Activated CD4-positive, alpha-beta T cell treated with anti-CD3 and anti-CD28 coated beads for 36 hours (primary cell): ENCODE measurements at regions of chr5 and their contacts with region 1.

Region 1: GRCh38 chr5:140401362-140402257 is at the start of gene ANKHD1:
- DNase-seq: peak; percentile 98
- ATAC-seq: peak; percentile 83
- H3K4me3 Mint-ChIP-seq: no peak within 1 kb of the TSS
- H3K27ac Mint-ChIP-seq: peak within 1 kb of the TSS; percentile 87
- H3K4me1 Mint-ChIP-seq: peaks cover 24% of the 10 kb centered on the region
- H3K27me3 Mint-ChIP-seq: no peaks in the 10 kb centered on the region
- total RNA-seq, gene ANKHD1: 77.1 to 93.5 TPM

Region 2: GRCh38 chr5:140107312-140108083 is 294.1 kb before region 1 on chr5:
- CTCF ChIA-PET with region 1: no interaction called
- POLR2A ChIA-PET with region 1: no interaction called
- intact Hi-C with region 1: loop called in 1 of 2 experiments (anchors 1 kb)
- DNase-seq: peak; percentile 96
- ATAC-seq: peak; percentile 90
- H3K4me3 Mint-ChIP-seq: peak overlapping the region; percentile 99
- H3K27ac Mint-ChIP-seq: peak overlapping the region; percentile 95
- H3K4me1 Mint-ChIP-seq: peaks cover 43% of the 10 kb centered on the region
- H3K27me3 Mint-ChIP-seq: peaks cover 3% of the 10 kb centered on the region

Region 3: DNA sequence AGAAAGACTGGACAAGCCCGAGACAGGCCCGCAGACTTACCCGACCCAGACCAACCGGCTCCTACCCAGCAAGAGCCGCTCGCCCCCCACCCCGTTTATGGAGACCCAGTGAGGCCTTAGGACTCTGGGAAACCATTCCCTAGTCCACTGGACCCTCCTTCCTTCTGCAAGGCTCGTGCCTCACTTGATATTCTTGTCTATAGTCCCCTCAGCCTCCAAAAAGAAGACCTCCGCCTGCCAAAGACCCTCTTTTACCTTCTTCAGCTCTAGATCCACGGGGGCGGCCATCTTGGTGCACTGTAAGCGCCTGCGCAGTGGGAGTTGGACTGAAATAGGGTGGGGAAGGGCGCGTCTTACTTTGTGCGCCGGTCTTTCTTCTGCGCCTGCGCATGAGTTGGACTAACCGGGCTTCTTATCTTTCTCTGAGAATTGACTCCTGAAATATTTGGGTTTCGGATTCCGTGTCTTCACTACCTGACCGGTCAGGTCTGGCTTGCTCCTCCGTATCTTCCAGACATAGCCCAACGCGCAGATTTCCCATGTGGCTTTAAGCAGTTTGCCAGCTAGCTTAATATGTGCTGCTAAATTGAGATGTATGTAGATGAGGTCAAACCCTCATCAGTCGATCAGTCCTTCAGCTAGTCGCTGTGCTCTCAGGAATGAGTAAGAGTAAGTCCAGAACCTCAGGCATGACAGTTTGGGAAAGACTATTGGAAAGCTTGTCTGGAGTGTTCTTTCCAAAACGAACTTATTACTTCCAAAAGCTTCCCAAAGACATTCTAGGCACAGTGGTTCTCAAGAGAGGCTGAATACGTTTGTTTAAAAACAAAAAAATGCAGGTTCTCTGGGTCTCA is 98.6 kb before region 1 on chr5 and contains the start of gene PFDN1:
- CTCF ChIA-PET with region 1: no interaction called
- POLR2A ChIA-PET with region 1: no interaction called
- intact Hi-C with region 1: loop called in 1 of 2 experiments (anchors 1 kb)
- DNase-seq: peak; percentile 96
- ATAC-seq: peak; percentile 99
- H3K4me3 Mint-ChIP-seq: peak within 1 kb of the TSS; percentile 91
- H3K27ac Mint-ChIP-seq: peak within 1 kb of the TSS; percentile 91
- H3K4me1 Mint-ChIP-seq: peaks cover 29% of the 10 kb centered on the region
- H3K27me3 Mint-ChIP-seq: peaks cover 4% of the 10 kb centered on the region
- total RNA-seq, gene PFDN1: 52.6 to 63.2 TPM

Region 4: GRCh38 chr5:140322751-140323731 is 78.6 kb before region 1 on chr5:
- CTCF ChIA-PET with region 1: no interaction called
- POLR2A ChIA-PET with region 1: no interaction called
- intact Hi-C with region 1: no loop called
- DNase-seq: no peak
- ATAC-seq: no peak
- H3K4me3 Mint-ChIP-seq: no peak overlapping the region
- H3K27ac Mint-ChIP-seq: no peak overlapping the region
- H3K4me1 Mint-ChIP-seq: peaks cover 5% of the 10 kb centered on the region
- H3K27me3 Mint-ChIP-seq: no peaks in the 10 kb centered on the region

Region 5: DNA sequence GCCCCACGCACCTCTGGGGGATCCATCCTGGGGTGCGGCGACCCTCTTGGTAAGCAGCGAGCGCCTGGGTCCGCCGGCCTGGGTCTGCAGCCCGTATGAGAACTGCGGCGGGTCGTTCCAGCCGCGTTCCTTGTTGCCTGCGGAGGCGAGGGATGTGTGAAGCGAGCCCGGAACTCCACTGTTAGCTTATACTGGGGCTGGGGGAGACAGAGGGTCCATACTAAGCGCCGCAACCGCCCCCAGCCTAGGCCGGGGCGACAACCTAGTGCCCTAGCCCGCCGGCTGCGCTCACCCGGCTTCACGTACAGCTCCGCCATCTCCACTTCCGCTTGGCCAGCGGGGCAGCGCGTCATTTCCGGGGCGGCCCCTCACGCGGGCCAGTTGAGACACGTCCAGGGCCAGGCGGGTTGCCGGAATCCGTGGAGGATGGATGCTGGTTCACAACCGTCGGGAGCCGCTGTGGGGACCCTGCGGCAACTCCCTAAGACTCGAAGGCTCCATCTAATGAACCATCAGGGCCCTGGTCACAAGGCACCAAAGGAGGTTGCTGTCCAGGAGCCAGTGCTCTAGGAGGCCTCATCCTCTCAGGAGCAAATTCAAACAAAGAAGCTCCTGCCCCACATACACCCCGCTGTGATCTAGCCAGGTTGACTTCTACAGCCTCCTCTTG is 155.7 kb after region 1 on chr5 and contains the start of gene SRA1:
- CTCF ChIA-PET with region 1: no interaction called
- POLR2A ChIA-PET with region 1: interaction called, 3 read pairs
- intact Hi-C with region 1: loop called in 1 of 2 experiments (anchors 1 kb)
- DNase-seq: peak; percentile 92
- ATAC-seq: peak; percentile 83
- H3K4me3 Mint-ChIP-seq: peak within 1 kb of the TSS; percentile 89
- H3K27ac Mint-ChIP-seq: peak within 1 kb of the TSS; percentile 93
- H3K4me1 Mint-ChIP-seq: peaks cover 45% of the 10 kb centered on the region
- H3K27me3 Mint-ChIP-seq: no peaks in the 10 kb centered on the region
- total RNA-seq, gene SRA1: 33.2 to 47.3 TPM

Region 6: DNA sequence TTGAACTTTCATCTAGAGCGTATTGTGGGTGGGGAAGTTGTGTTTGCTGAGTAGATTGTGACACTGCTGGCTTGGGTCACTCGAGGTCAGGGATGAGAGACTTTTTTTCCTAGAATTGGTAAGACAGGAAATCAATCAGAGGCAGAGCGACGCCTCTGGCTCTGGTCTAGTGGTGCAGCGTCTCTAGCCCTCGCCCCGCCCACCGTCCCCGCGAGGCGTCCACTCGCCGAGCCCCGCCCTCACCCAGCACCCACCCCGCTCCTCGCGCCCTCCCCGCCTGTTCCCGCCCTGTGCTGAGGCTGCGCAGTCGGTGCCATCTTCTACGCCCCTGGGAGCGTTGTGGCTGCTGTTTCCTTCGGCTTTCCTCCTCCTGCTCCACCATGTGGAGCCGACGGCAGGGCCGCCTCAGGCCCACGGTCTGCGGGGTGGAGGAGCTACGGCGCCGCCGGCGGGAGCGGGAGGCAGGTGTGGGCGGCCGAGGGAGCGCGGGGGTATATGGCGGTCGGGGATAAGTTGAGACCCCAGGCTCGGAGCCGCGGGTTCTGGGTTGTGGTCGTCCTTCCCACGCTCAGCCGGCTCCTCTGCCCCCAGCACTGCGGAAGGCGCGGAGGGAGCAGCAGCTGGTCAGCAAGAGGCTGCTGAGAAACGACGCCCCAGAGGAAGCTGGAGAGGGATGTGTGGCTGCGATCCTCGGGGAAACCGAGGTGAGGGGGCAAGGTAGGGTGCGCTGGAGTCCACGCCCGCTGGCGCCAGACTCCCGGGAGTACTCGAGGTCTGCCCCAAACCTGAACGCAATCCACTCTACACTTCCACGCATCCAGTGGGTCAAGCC is 237.8 kb after region 1 on chr5 and contains the start of gene TMCO6:
- CTCF ChIA-PET with region 1: no interaction called
- POLR2A ChIA-PET with region 1: interaction called, 3 read pairs
- intact Hi-C with region 1: loop called (anchors 1 kb)
- DNase-seq: peak; percentile 99
- ATAC-seq: peak; percentile 94
- H3K4me3 Mint-ChIP-seq: peak within 1 kb of the TSS; percentile 93
- H3K27ac Mint-ChIP-seq: peak within 1 kb of the TSS; percentile 95
- H3K4me1 Mint-ChIP-seq: peaks cover 39% of the 10 kb centered on the region
- H3K27me3 Mint-ChIP-seq: no peaks in the 10 kb centered on the region
- total RNA-seq, gene TMCO6: 36.5 to 36.6 TPM

Region 7: GRCh38 chr5:140690941-140691924 is 289.6 kb after region 1 on chr5 and contains the starts of genes HARS1 and HARS2:
- CTCF ChIA-PET with region 1: no interaction called
- POLR2A ChIA-PET with region 1: interaction called, 3 read pairs
- intact Hi-C with region 1: loop called (anchors 1 kb)
- DNase-seq: peak; percentile 91
- ATAC-seq: peak; percentile 95
- H3K4me3 Mint-ChIP-seq: peak within 1 kb of the TSS; percentile 97
- H3K27ac Mint-ChIP-seq: peak within 1 kb of the TSS; percentile 98
- H3K4me1 Mint-ChIP-seq: peaks cover 41% of the 10 kb centered on the region
- H3K27me3 Mint-ChIP-seq: no peaks in the 10 kb centered on the region
- total RNA-seq, gene HARS1: 83.3 to 91.0 TPM
- total RNA-seq, gene HARS2: 20.9 to 28.1 TPM

Region 8: DNA sequence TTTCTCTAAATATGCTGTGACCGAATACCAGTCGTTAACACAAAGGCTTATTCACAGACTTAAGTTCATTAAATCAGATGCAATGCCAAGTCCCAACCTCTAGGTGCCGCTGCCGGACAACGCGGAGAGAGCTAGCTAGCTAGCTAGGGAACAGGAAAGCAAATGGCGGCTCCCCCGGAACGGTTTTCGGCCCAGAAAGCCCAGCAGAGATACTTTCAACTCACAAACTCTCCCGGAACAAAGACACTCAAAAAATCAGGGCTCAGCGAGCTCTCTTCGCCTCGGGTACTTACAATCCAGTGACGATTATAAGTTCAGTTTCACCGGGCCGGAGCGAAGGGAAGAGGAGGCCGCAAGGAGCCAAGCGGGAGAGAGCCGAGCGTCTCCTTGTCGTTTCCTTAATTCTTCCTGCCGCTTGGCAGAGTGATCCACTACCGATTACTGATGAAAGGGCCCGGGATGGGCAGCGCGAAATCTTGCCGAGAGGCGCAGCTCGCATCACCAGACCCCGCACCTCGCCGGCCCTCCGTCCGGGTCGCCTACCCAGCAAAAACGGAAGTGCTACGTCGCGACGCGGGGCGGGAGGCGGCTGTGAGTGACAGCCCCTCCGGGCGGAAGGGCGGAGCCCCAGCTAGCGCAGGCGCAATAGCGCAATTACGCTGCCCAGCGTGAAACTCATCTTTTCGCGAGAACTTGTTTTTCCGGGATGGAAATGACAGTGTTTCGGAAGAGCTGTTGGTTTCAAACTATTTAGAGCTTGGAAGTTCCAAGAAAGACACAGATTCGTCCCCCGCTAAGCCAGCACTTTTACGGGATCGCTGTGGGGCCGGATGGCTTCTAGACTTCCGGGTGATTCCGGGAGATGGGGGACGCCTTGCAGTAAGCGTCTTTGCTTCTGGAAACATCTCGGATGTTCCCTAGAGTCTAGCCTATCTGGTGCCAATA is 918.9 kb after region 1 on chr5 and contains the start of gene TAF7:
- CTCF ChIA-PET with region 1: interaction called, 3 read pairs
- POLR2A ChIA-PET with region 1: no interaction called
- intact Hi-C with region 1: loop called in 1 of 2 experiments (anchors 2 kb)
- DNase-seq: peak; percentile 96
- ATAC-seq: peak; percentile 96
- H3K4me3 Mint-ChIP-seq: peak within 1 kb of the TSS; percentile 91
- H3K27ac Mint-ChIP-seq: peak within 1 kb of the TSS; percentile 100
- H3K4me1 Mint-ChIP-seq: peaks cover 23% of the 10 kb centered on the region
- H3K27me3 Mint-ChIP-seq: peaks cover 2% of the 10 kb centered on the region
- total RNA-seq, gene TAF7: 45.2 to 54.4 TPM